WTC11 (cell line): ENCODE measurements at regions of chr1 and their contacts with region 1.

Region 1: GRCh38 chr1:150186789-150187559 is 37.3 kb downstream of the PLEKHO1 start:
- DNase-seq: no peak
- ATAC-seq: peak; percentile 65
- H3K4me3 Mint-ChIP-seq: no peak overlapping the region
- H3K27ac Mint-ChIP-seq: no peak overlapping the region
- H3K4me1 Mint-ChIP-seq: peaks cover 2% of the 10 kb centered on the region; the same call in 1 of the 2 replicates
- H3K27me3 Mint-ChIP-seq: no peaks in the 10 kb centered on the region
- CTCF ChIP-seq: peak; percentile 48; the same call in 1 of the 2 replicates

Region 2: DNA sequence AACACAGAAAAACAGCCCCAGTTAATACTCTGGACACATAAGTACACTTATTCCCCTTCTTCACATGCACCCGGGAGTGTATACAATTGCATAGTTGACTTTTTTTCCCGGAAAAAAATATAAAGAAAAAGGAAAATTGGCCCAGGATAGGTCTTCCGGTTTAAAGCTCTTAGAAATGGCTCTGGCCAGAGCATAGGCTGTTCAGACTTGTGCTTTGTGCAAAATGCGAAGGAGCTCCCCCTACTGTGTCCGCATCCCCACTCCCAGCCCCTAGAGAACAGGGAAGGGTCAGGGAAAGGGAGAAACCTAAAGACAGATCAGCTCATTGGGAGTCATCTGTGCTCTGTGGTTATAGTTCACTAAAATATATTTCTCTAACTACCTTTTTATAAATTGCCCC is 244.8 kb before region 1 on chr1:
- CTCF ChIA-PET with region 1: interaction called, 13 read pairs
- POLR2A ChIA-PET with region 1: no interaction called
- DNase-seq: peak; percentile 53
- ATAC-seq: peak; percentile 77
- H3K4me3 Mint-ChIP-seq: no peak overlapping the region
- H3K27ac Mint-ChIP-seq: peak overlapping the region; percentile 49
- H3K4me1 Mint-ChIP-seq: peaks cover 48% of the 10 kb centered on the region
- H3K27me3 Mint-ChIP-seq: no peaks in the 10 kb centered on the region; the same call in 1 of the 2 replicates
- CTCF ChIP-seq: no peak

Region 3: GRCh38 chr1:150051089-150051373 is 135.9 kb before region 1 on chr1:
- CTCF ChIA-PET with region 1: interaction called, 13 read pairs
- POLR2A ChIA-PET with region 1: no interaction called
- DNase-seq: no peak
- ATAC-seq: no peak
- H3K4me3 Mint-ChIP-seq: no peak overlapping the region
- H3K27ac Mint-ChIP-seq: no peak overlapping the region
- H3K4me1 Mint-ChIP-seq: peaks cover 7% of the 10 kb centered on the region
- H3K27me3 Mint-ChIP-seq: no peaks in the 10 kb centered on the region
- CTCF ChIP-seq: no peak

Region 4: GRCh38 chr1:150168960-150169601 is 17.9 kb before region 1 on chr1:
- CTCF ChIA-PET with region 1: interaction called, 22 read pairs
- POLR2A ChIA-PET with region 1: no interaction called
- DNase-seq: peak; percentile 83
- ATAC-seq: peak; percentile 76
- H3K4me3 Mint-ChIP-seq: no peak overlapping the region
- H3K27ac Mint-ChIP-seq: no peak overlapping the region
- H3K4me1 Mint-ChIP-seq: peaks cover 7% of the 10 kb centered on the region
- H3K27me3 Mint-ChIP-seq: no peaks in the 10 kb centered on the region
- CTCF ChIP-seq: peak; percentile 64

Region 5: DNA sequence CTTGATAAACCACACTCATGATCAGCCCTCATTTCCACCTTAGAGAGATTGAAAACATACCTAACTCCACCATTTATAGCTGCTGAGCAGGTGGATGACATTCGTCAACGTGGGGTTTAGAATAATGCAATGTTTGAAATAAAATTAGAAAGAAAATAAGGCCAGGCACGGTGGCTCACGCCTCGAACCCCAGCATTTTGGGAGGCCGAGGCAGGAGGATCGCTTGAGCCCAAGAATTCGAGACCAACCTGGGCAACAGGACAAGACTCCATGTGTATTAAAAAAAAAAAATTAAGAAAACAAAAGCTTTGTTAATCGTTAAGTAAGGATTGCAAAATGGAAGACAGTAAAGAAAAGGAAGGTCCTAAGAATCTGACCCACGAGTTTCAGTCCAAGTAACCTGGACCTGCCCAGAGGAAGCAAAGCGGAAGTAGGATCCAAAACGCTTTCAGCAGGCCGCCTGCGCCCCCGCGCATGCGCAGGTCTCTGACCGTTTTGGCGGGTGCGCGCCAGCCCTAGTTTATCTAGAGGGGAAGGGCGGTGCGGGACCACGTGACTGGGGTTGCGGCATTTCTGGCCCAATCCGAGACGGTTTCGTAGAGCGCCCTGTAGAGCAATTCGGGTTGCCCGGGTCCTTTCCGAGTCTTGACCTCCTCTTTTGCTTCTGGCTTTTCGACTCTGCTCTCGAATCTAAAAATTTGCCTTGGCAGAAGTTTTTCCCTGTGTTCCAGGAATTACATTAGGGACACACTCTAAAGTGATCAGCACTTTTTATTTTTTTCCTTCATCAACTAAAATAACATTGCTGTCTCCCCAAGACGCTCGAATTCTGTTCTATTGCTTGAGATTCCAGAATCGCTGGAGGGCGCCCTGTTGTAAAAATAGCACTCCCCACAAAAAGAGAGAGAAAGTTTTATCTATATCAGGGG is 26.5 kb after region 1 on chr1:
- CTCF ChIA-PET with region 1: interaction called, 14 read pairs
- POLR2A ChIA-PET with region 1: no interaction called
- DNase-seq: peak; percentile 93
- ATAC-seq: peak; percentile 99
- H3K4me3 Mint-ChIP-seq: peak overlapping the region; percentile 77
- H3K27ac Mint-ChIP-seq: peak overlapping the region; percentile 98
- H3K4me1 Mint-ChIP-seq: peaks cover 6% of the 10 kb centered on the region
- H3K27me3 Mint-ChIP-seq: no peaks in the 10 kb centered on the region; the same call in 1 of the 2 replicates
- CTCF ChIP-seq: no peak